WTC11 (cell line): ENCODE measurements at regions of chr14 and their contacts with region 1.

Region 1: GRCh38 chr14:24036169-24036962 is 15.4 kb upstream of the CARMIL3 start:
- DNase-seq: peak; percentile 80
- ATAC-seq: peak; percentile 77
- H3K4me3 Mint-ChIP-seq: peak overlapping the region; percentile 91
- H3K27ac Mint-ChIP-seq: peak overlapping the region; percentile 57
- H3K4me1 Mint-ChIP-seq: peaks cover 12% of the 10 kb centered on the region
- H3K27me3 Mint-ChIP-seq: peaks cover 28% of the 10 kb centered on the region
- CTCF ChIP-seq: peak; percentile 37

Region 2: GRCh38 chr14:24051789-24052655 is 15.7 kb after region 1 on chr14 and contains the start of gene CARMIL3:
- CTCF ChIA-PET with region 1: interaction called, 11 read pairs
- POLR2A ChIA-PET with region 1: interaction called, 3 read pairs
- DNase-seq: peak; percentile 85
- ATAC-seq: peak; percentile 81
- H3K4me3 Mint-ChIP-seq: peak within 1 kb of the TSS; percentile 76
- H3K27ac Mint-ChIP-seq: peak within 1 kb of the TSS; percentile 58
- H3K4me1 Mint-ChIP-seq: peaks cover 18% of the 10 kb centered on the region
- H3K27me3 Mint-ChIP-seq: peaks cover 3% of the 10 kb centered on the region
- CTCF ChIP-seq: no peak
- total RNA-seq, gene CARMIL3: 10.6 to 13.0 TPM (median 11.4 TPM) in 3 replicates